GM12878 (cell line): ENCODE measurements at regions of chr12 and their contacts with region 1.

Region 1: DNA sequence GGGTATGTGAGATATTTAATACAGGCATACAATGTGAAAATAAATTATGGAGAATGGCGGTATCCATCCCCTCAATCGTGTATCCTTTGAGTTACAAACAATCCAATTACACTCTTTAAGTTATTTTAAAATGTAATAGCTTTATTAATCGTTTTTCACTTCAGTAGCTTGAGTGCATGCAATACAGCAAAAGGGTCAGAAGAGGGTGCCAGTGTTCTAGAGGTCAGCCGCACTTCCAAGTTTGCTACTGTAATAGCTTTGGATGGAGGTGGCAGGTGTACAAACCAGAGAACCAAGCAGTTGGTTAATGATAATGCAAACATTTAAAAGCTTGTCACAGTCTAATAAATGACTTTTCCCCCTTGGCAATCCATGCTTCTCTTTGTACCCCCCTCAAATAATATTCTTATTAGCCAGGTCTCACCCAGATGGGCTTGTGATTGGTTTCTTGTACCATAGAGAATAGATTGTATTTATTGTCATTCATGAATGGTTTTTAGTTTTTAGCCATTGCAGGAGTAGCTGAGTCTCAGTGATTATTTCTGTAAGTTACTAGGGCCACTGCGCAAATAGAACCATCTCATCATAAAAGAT is 127.0 kb downstream of the ERC1 start:
- DNase-seq: no peak
- ATAC-seq: peak; percentile 73
- H3K4me3 ChIP-seq: no peak overlapping the region
- H3K27ac ChIP-seq: no peak overlapping the region
- H3K4me1 ChIP-seq: peaks cover 4% of the 10 kb centered on the region; the same call in 1 of the 2 replicates
- H3K27me3 ChIP-seq: no peaks in the 10 kb centered on the region
- CTCF ChIP-seq: peak; percentile 80 to 87 (median 83)
- EP300 ChIP-seq: no peak
- POLR2A ChIP-seq: no peak
- RAD21 ChIP-seq: peak; percentile 97

Region 2: GRCh38 chr12:1073652-1074051 is 44.4 kb before region 1 on chr12:
- CTCF ChIA-PET with region 1: interaction called, 24 read pairs
- POLR2A ChIA-PET with region 1: interaction called, 3 read pairs
- RAD21 ChIA-PET with region 1: interaction called, 10 read pairs
- SMC1A ChIA-PET with region 1: interaction called, 16 read pairs
- in situ Hi-C with region 1: no loop called
- intact Hi-C with region 1: no loop called
- DNase-seq: no peak
- ATAC-seq: no peak
- H3K4me3 ChIP-seq: no peak overlapping the region
- H3K27ac ChIP-seq: no peak overlapping the region
- H3K4me1 ChIP-seq: no peaks in the 10 kb centered on the region; the same call in 1 of the 2 replicates
- H3K27me3 ChIP-seq: peaks cover 0 to 2% of the 10 kb centered on the region in 2 experiments; a peak in 1 of 4 replicates
- CTCF ChIP-seq: no peak
- EP300 ChIP-seq: no peak
- POLR2A ChIP-seq: no peak
- RAD21 ChIP-seq: no peak

Region 3: GRCh38 chr12:1185460-1186182 is 67.6 kb after region 1 on chr12:
- CTCF ChIA-PET with region 1: interaction called, 7 read pairs
- POLR2A ChIA-PET with region 1: no interaction called
- RAD21 ChIA-PET with region 1: interaction called, 9 read pairs
- SMC1A ChIA-PET with region 1: interaction called, 21 read pairs
- in situ Hi-C with region 1: no loop called
- intact Hi-C with region 1: no loop called
- DNase-seq: peak; percentile 56
- ATAC-seq: peak; percentile 97
- H3K4me3 ChIP-seq: 0 out of 2 replicates have a peak overlapping the region, but pooled peaks have one; percentile 44
- H3K27ac ChIP-seq: no peak overlapping the region; the same call in 1 of the 2 replicates
- H3K4me1 ChIP-seq: peaks cover 9% of the 10 kb centered on the region
- H3K27me3 ChIP-seq: no peaks in the 10 kb centered on the region
- CTCF ChIP-seq: no peak
- EP300 ChIP-seq: peak in 1 of 2 experiments; percentile 37; a peak in 1 of 4 replicates
- POLR2A ChIP-seq: no peak
- RAD21 ChIP-seq: no peak

Region 4: GRCh38 chr12:1267243-1267642 is 149.2 kb after region 1 on chr12:
- CTCF ChIA-PET with region 1: interaction called, 8 read pairs
- POLR2A ChIA-PET with region 1: no interaction called
- RAD21 ChIA-PET with region 1: interaction called, 9 read pairs
- SMC1A ChIA-PET with region 1: interaction called, 11 read pairs
- in situ Hi-C with region 1: no loop called
- intact Hi-C with region 1: no loop called
- DNase-seq: no peak
- ATAC-seq: no peak
- H3K4me3 ChIP-seq: no peak overlapping the region
- H3K27ac ChIP-seq: no peak overlapping the region
- H3K4me1 ChIP-seq: no peaks in the 10 kb centered on the region
- H3K27me3 ChIP-seq: no peaks in the 10 kb centered on the region
- CTCF ChIP-seq: no peak
- EP300 ChIP-seq: no peak
- POLR2A ChIP-seq: no peak
- RAD21 ChIP-seq: no peak

Region 5: DNA sequence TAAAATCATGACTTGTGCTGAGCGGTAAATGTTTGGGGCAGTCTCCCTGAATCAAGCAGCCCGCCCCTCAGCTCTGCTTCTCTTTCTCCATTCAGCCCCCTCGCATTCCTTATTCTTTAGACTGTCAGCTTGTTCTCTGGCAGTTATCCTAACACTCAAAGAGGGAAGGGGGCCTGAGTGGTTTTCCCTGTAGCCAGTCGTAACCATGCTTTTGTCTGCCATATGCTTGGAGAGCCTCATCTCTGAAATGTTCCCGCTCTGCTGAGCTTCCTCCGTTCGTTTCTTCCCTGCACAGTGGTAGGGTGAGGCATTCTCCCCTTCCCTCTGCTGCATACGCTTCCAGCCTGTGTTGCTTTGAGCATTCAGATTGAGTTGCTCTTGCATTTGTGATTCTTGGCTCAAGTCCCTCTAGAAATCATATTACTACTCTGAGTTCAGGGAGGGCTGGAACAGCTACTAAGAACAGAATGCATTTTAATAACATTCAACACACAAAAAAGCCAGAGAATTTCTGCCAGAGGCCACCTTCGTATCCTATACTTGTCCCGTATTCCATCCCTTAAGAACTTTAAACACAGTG is 356.6 kb after region 1 on chr12:
- CTCF ChIA-PET with region 1: interaction called, 7 read pairs
- POLR2A ChIA-PET with region 1: no interaction called
- RAD21 ChIA-PET with region 1: interaction called, 8 read pairs
- SMC1A ChIA-PET with region 1: interaction called, 13 read pairs
- in situ Hi-C with region 1: no loop called
- intact Hi-C with region 1: no loop called
- DNase-seq: no peak
- ATAC-seq: no peak
- H3K4me3 ChIP-seq: no peak overlapping the region
- H3K27ac ChIP-seq: no peak overlapping the region
- H3K4me1 ChIP-seq: no peaks in the 10 kb centered on the region
- H3K27me3 ChIP-seq: no peaks in the 10 kb centered on the region
- CTCF ChIP-seq: no peak
- EP300 ChIP-seq: no peak
- POLR2A ChIP-seq: no peak
- RAD21 ChIP-seq: no peak

Region 6: GRCh38 chr12:1553987-1554982 is 436.2 kb after region 1 on chr12:
- CTCF ChIA-PET with region 1: interaction called, 11 read pairs
- POLR2A ChIA-PET with region 1: interaction called, 7 read pairs
- RAD21 ChIA-PET with region 1: interaction called, 3 read pairs
- SMC1A ChIA-PET with region 1: interaction called, 6 read pairs
- in situ Hi-C with region 1: no loop called
- intact Hi-C with region 1: no loop called
- DNase-seq: peak; percentile 94
- ATAC-seq: peak; percentile 96
- H3K4me3 ChIP-seq: peak overlapping the region; percentile 24; the same call in 1 of the 2 replicates
- H3K27ac ChIP-seq: peak overlapping the region; percentile 82
- H3K4me1 ChIP-seq: peaks cover 20% of the 10 kb centered on the region
- H3K27me3 ChIP-seq: no peaks in the 10 kb centered on the region
- CTCF ChIP-seq: peak in 1 of 3 experiments; percentile 6; a peak in 1 of 6 replicates
- EP300 ChIP-seq: peak; percentile 94 to 96
- POLR2A ChIP-seq: peak; percentile 45; the same call in 1 of the 2 replicates
- RAD21 ChIP-seq: peak; percentile 25

Region 7: GRCh38 chr12:1634590-1635191 is 516.6 kb after region 1 on chr12:
- CTCF ChIA-PET with region 1: interaction called, 42 read pairs
- POLR2A ChIA-PET with region 1: no interaction called
- RAD21 ChIA-PET with region 1: interaction called, 18 read pairs
- SMC1A ChIA-PET with region 1: interaction called, 20 read pairs
- in situ Hi-C with region 1: no loop called
- intact Hi-C with region 1: no loop called
- DNase-seq: no peak
- ATAC-seq: peak; percentile 82
- H3K4me3 ChIP-seq: no peak overlapping the region
- H3K27ac ChIP-seq: no peak overlapping the region
- H3K4me1 ChIP-seq: 0 out of 2 replicates have a peak, but pooled peaks cover 6% of the 10 kb centered on the region
- H3K27me3 ChIP-seq: peaks cover 2 to 4% of the 10 kb centered on the region in 2 experiments; a peak in 2 of 4 replicates
- CTCF ChIP-seq: peak; percentile 79 to 83 (median 82)
- EP300 ChIP-seq: no peak
- POLR2A ChIP-seq: no peak
- RAD21 ChIP-seq: peak; percentile 72